ENCODE measurements at regions of chr6 and their contacts with region 1.

Region 1: GRCh38 chr6:99393698-99394531 is at the start of gene COQ3:
- DNase-seq: peak; percentile 63 to 94
- H3K4me3 ChIP-seq: peak within 1 kb of the TSS; percentile 77 to 86 (median 82)
- H3K27ac ChIP-seq: peak within 1 kb of the TSS; percentile 83
- H3K4me1 ChIP-seq: no peaks in the 10 kb centered on the region
- H3K27me3 ChIP-seq: no peaks in the 10 kb centered on the region
- CTCF ChIP-seq: no peak
- EP300 ChIP-seq: no peak
- POLR2A ChIP-seq: peak; percentile 81 to 96
- RAD21 ChIP-seq: peak in 1 of 2 experiments; percentile 6; a peak in 1 of 4 replicates
- total RNA-seq, gene COQ3: 16.2 and 16.6 TPM in 2 replicates

Region 2: GRCh38 chr6:99338188-99338587 is 55.7 kb before region 1 on chr6:
- CTCF ChIA-PET with region 1: interaction called, 11 read pairs
- POLR2A ChIA-PET with region 1: interaction called, 17 read pairs
- DNase-seq: no peak
- H3K4me3 ChIP-seq: no peak overlapping the region
- H3K27ac ChIP-seq: no peak overlapping the region
- H3K4me1 ChIP-seq: peaks cover 0 to 6% (median 2%) of the 10 kb centered on the region in 4 experiments; a peak in 3 of 7 replicates
- H3K27me3 ChIP-seq: no peaks in the 10 kb centered on the region
- CTCF ChIP-seq: no peak
- EP300 ChIP-seq: no peak
- POLR2A ChIP-seq: no peak
- RAD21 ChIP-seq: no peak

Region 3: DNA sequence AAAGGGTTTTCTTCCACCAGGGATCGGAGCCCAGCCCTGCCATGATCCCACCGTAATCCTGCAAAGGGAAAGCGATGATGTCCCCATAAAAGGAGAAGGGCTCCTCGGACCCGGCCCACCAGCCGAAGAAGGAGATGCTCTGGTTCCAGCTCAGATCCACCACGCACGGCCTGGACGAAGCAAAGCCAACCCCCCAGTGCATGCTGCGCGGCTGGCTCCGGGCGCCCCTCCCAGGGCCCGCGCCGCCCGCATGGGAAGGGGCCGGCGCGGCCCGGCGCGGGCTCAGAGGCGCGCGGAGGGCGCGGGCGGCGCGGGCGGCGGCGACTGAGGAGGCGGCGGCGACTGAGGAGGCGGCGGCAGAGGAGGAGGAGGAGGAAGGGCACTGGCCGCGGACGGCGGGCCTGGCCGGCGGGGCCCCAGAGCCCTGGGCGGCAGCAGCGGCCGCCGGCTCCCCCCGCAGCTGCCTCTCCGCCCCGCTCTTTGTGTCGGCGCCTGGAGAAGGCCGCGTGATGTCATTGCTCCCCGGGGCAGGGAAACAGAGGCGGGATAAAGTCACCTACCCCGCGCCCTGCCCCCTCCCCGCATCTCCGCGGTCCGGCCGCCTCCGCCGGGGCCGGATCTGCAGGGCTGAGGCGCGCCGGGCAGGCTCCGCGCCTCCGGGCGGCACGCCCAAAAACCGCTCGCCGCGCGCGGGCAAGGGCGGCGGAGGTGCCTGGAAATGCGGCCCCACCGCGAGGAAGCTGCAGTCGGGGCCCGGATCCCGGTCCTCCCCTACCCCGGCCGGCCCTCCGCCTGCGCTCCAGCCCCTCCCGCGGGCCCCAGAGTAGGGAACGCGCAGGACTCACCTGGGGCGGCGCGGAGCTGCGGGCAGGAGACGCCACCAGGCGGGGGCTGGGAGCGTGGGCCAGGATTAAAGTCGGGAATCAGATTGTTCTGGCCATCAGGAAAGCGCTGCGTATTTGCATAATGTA is 44.5 kb before region 1 on chr6 and contains the start of gene FAXC:
- CTCF ChIA-PET with region 1: interaction called, 8 read pairs
- POLR2A ChIA-PET with region 1: interaction called, 23 read pairs
- DNase-seq: peak in 1 of 2 experiments; percentile 81
- H3K4me3 ChIP-seq: peak within 1 kb of the TSS; percentile 86 to 96 (median 90)
- H3K27ac ChIP-seq: peak within 1 kb of the TSS; percentile 62; the same call in 1 of the 2 replicates
- H3K4me1 ChIP-seq: peaks cover 0 to 9% (median 6%) of the 10 kb centered on the region in 4 experiments; a peak in 6 of 7 replicates
- H3K27me3 ChIP-seq: no peaks in the 10 kb centered on the region; a peak in 1 of 7 replicates
- CTCF ChIP-seq: peak; percentile 31 to 45 (median 35)
- EP300 ChIP-seq: no peak
- POLR2A ChIP-seq: peak; percentile 72 to 73
- RAD21 ChIP-seq: peak; percentile 36 to 47; a peak in 2 of 4 replicates
- total RNA-seq, gene FAXC: 25.6 and 29.8 TPM in 2 replicates

Region 4: DNA sequence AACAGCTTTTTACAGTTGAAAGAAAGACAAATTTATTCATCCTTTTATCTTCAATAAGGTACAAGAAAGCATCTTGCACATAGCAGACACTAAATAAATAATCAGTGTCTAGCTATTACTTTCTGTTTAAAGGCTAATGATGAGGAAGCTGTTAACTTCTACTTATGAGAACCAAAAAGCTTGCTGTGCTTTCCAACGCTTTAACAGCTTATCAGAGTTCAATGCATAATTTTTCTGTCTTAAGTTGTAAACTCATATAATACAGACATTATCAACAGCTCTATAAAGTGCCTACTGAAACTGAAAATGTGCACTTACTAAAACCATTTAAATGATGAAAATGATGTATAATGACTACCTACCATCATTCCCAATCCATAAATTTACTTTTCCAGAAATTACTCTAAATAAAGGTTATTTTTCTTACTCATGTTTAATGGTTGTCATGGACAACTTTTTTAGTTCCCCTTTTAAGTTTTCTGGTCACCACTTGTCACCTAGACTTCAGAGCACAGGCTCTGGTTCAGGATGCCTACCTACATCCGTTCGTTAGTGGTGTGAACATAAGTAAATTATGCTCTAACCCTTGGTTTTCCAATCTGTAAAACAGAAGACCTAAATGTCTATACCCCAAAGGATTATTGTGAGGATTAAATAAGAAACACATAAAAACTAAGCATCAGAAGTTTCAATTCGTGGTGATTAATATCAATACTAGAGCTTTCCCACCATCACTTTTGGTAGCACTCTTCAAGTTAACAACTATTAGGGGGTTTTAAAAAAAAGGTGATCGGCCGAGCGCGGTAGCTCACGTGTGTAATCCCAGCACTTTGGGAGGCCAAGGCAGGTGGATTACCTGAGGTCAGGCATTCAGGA is 23.2 kb after region 1 on chr6:
- CTCF ChIA-PET with region 1: interaction called, 11 read pairs
- POLR2A ChIA-PET with region 1: interaction called, 79 read pairs
- DNase-seq: no peak
- H3K4me3 ChIP-seq: no peak overlapping the region
- H3K27ac ChIP-seq: no peak overlapping the region
- H3K4me1 ChIP-seq: no peaks in the 10 kb centered on the region; a peak in 2 of 7 replicates
- H3K27me3 ChIP-seq: no peaks in the 10 kb centered on the region
- CTCF ChIP-seq: no peak
- EP300 ChIP-seq: no peak
- POLR2A ChIP-seq: no peak
- RAD21 ChIP-seq: no peak

Region 5: DNA sequence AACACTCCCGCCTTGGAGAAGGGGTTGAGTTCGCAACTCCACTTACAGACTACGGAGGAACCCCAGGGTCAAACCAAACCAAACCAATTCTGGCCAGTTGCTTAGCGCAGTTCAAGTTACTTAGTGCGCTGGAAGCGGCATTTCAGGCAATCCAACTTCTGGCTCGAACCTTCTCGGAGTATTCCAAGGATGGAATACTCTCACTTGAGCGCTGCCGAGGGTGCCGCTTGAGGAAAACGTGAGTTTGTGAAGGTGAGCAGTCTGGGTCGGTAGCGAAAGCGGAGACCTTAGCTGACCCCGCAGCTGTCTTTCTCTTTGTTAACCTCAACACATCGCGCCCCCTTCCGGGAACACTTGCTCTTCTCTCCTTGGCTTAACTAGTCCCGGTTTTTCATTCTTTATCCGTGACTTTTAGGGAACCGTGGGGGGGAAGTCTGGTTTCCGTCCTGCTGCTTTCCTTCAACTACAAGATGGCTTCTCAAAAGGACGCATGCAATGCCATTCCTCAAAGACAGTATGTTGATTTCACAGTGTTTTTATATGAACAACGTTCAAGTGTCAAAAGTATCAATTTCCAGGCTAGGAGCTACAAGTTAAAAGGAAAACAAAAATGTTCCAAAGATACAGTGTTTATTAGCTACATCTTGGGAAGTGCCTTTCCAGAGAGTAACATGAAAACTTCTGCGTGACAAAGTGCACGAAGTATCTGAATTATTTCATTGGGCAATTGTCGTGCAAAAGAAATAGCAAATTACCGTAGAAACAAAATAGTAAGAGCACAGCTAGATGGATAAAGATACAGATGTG is 31.9 kb after region 1 on chr6:
- CTCF ChIA-PET with region 1: interaction called, 11 read pairs
- POLR2A ChIA-PET with region 1: interaction called, 79 read pairs
- DNase-seq: peak; percentile 87 to 90
- H3K4me3 ChIP-seq: peak overlapping the region; percentile 79 to 99 (median 92)
- H3K27ac ChIP-seq: peak overlapping the region; percentile 97
- H3K4me1 ChIP-seq: peaks cover 0 to 11% (median 5%) of the 10 kb centered on the region in 4 experiments; a peak in 4 of 7 replicates
- H3K27me3 ChIP-seq: no peaks in the 10 kb centered on the region
- CTCF ChIP-seq: peak; percentile 37 to 63 (median 44); a peak in 3 of 4 replicates
- EP300 ChIP-seq: peak in 1 of 2 experiments; percentile 85; a peak in 1 of 3 replicates
- POLR2A ChIP-seq: peak in 1 of 2 experiments; percentile 79; a peak in 2 of 3 replicates
- RAD21 ChIP-seq: peak; percentile 34 to 42

Region 6: GRCh38 chr6:99588618-99589289 is 194.8 kb after region 1 on chr6:
- CTCF ChIA-PET with region 1: no interaction called
- POLR2A ChIA-PET with region 1: no interaction called
- DNase-seq: peak; percentile 81 to 84
- H3K4me3 ChIP-seq: peak overlapping the region; percentile 25 to 61 (median 38)
- H3K27ac ChIP-seq: no peak overlapping the region
- H3K4me1 ChIP-seq: peaks cover 0 to 6% (median 2%) of the 10 kb centered on the region in 4 experiments; a peak in 4 of 7 replicates
- H3K27me3 ChIP-seq: peaks cover 56 to 90% (median 76%) of the 10 kb centered on the region in 4 experiments
- CTCF ChIP-seq: peak; percentile 70 to 78 (median 76)
- EP300 ChIP-seq: no peak
- POLR2A ChIP-seq: no peak
- RAD21 ChIP-seq: peak; percentile 81 to 85